Breast epithelium (tissue), 4 donors: ENCODE measurements at regions of chr10 and their contacts with region 1.

Region 1: DNA sequence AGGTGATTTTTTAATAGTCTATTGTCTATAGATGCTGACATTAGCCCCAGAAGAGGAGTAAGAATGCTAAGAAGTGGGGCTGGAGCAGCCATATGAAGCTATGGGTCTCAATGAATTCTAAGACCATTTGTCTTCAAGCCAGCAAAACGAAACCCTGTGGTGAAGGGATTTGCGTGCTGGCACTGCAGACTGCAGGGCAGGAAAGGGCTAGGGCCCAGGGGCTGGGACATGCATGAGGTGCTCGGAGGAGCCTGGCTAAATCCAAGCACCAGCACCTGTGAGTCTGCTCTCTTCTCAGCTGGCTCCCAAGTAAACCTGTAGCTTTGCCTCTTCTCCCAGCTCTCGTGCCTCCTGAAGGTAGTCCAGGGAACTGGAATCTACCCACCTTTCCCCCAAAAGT is 1.3 kb upstream of the NDST2 start:
- DNase-seq: no peak
- H3K4me3 ChIP-seq: no peak overlapping the region
- H3K27ac ChIP-seq: peak overlapping the region in 1 of 2 donors; percentile 92
- H3K4me1 ChIP-seq: no peaks in the 10 kb centered on the region
- H3K27me3 ChIP-seq: no peaks in the 10 kb centered on the region
- CTCF ChIP-seq: no peak
- POLR2A ChIP-seq: no peak

Region 2: GRCh38 chr10:73625884-73626752 is 186.5 kb before region 1 on chr10:
- intact Hi-C with region 1: no loop called
- DNase-seq: peak; percentile 91 to 95
- H3K4me3 ChIP-seq: peak overlapping the region; percentile 82 to 93 (median 92)
- H3K27ac ChIP-seq: peak overlapping the region; percentile 93 to 98
- H3K4me1 ChIP-seq: no peaks in the 10 kb centered on the region
- H3K27me3 ChIP-seq: no peaks in the 10 kb centered on the region
- CTCF ChIP-seq: no peak
- POLR2A ChIP-seq: peak; percentile 31

Region 3: DNA sequence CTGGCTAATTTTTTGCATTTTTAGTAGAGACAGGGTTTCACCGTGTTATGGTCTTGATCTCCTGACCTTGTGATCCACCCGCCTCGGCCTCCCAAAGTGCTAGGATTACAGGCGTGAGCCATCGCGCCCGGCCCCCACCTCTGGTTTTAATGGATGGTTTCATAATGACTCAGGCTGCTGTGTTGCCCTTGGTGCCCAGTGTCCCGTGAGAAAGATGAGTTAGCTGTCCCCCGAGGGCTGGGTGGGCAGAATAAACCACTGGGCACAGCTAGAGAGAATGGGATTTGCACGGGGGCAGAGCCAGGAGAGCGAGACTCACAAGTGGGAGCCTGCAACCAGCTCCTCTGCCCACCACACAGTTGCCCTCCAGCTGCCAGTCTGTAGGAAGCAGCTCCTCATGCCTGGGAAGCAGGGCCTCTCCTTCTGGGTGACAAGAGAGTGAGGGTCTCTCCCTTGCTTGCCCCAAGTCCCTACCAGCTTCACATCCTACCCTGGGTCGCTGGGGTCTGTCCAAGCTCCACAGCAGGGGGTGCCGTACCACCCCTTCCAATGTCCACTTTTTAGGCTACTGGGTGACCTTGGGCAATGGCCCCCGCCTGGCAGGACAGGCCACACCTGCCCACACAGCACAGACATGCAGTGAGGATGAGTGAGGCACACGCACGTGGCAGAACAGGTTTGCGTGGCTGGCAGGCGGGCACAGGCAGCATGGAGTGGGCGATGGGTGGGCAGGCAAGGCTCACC is 14.9 kb after region 1 on chr10:
- intact Hi-C with region 1: loop called (anchors 1 kb)
- DNase-seq: no peak
- H3K4me3 ChIP-seq: no peak overlapping the region
- H3K27ac ChIP-seq: no peak overlapping the region
- H3K4me1 ChIP-seq: no peaks in the 10 kb centered on the region
- H3K27me3 ChIP-seq: no peaks in the 10 kb centered on the region
- CTCF ChIP-seq: no peak
- POLR2A ChIP-seq: no peak

Region 4: DNA sequence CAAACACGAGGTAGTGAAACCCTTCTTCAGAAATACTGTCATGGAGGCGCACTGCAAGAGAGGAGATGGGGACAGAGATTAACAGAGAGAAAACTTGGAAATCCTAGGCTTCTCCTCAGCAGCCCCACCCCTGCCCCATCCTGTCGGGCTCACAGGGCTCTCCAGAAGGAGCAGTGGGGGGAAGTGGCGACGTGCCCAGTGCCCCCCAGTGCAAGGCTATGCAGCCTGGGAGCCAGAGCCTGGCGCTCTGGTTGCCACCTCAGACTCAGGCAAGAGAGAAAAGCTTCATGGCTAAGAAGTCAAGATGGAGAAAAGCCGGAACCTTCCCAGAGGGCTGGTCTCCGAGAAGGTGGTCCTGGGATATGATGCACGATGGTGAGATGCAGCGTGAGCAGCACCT is 40.5 kb after region 1 on chr10:
- intact Hi-C with region 1: loop called (anchors 1 kb)
- DNase-seq: no peak
- H3K4me3 ChIP-seq: no peak overlapping the region
- H3K27ac ChIP-seq: no peak overlapping the region
- H3K4me1 ChIP-seq: peaks cover 0 to 4% of the 10 kb centered on the region in 2 donors
- H3K27me3 ChIP-seq: no peaks in the 10 kb centered on the region
- CTCF ChIP-seq: no peak
- POLR2A ChIP-seq: no peak